ENCODE measurements at regions of chr9 and their contacts with region 1.

Region 1: DNA sequence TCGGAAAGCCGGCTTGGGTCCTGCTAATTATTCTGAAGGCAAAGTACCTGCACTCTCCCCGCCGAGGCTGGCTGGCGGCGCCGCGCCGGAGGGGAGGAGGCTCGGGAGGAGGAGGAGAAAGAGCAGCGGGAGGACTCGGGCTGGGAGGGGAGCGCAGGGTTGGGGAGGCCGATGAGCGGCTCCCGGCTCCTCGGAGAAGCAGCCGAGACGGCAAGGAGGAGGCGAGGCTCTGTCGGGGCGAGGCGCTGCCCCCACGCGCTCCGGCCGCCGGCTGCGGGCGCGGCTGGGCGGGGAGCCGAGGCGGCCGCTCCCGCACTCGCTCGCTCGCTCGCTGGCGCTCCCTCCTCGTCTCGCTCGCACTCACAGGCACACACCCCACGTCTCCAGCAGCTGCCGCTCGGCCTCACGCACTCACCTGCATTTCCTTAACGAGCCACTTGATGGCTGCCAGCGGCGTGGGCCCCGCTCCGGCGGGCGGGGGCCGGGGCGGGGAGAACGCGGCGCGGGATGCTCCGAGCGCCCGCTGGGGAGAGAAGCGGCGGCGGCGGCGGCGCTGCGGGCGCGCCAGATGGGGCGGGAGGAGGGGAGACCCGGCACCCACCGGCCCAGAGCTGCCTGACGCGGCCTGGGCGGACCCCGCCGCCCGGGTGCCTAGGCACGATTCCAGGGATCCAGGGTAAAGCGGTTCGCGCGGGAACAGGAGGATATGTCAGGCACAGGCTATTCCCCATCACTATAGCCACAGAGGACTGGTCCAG is at the start of gene PTPRD:
- DNase-seq: peak; percentile 77
- ATAC-seq: peak; percentile 81
- H3K4me3 ChIP-seq: peak within 1 kb of the TSS; percentile 67
- H3K27ac ChIP-seq: no peak within 1 kb of the TSS
- H3K4me1 ChIP-seq: no peaks in the 10 kb centered on the region
- H3K27me3 ChIP-seq: peaks cover 12% of the 10 kb centered on the region
- CTCF ChIP-seq: no peak; the same call in 1 of the 2 replicates
- total RNA-seq, gene PTPRD: 0.63 TPM in 1 of 2 replicates, not detected in the other

Region 2: DNA sequence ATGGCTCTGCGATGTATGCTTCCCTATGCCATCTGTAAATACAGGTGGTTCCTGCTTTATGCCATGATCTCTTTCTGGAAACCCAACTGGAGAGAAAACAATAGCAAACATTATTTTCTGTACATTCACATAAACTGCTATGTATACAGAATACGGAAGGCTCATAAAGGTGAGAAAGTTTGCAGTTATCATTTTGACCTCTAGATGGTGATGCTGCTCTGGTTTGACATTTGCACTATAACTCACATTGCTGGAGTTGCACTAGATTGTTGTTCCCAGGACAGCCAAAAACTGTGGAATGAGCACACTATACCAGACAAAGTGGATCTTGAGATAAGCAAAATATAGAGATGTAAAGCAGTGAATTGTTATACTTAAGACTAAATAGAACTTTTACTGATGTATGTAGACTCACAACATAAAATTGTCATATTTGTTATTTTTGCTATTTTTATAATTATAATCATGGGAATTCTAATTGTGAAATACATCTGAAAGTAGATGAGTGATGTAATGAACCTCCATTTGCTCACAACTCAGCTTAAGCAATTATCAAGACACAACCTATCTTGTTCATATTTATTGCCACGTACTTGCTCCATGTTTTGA is 246.5 kb before region 1 on chr9:
- CTCF ChIA-PET with region 1: no interaction called
- POLR2A ChIA-PET with region 1: no interaction called
- intact Hi-C with region 1: loop called (anchors 2 kb)
- DNase-seq: peak; percentile 66
- ATAC-seq: peak; percentile 69
- H3K4me3 ChIP-seq: no peak overlapping the region
- H3K27ac ChIP-seq: no peak overlapping the region
- H3K4me1 ChIP-seq: no peaks in the 10 kb centered on the region
- H3K27me3 ChIP-seq: no peaks in the 10 kb centered on the region
- CTCF ChIP-seq: peak; percentile 69

Region 3: GRCh38 chr9:10649076-10649475 is 36.3 kb after region 1 on chr9:
- CTCF ChIA-PET with region 1: no interaction called
- POLR2A ChIA-PET with region 1: no interaction called
- intact Hi-C with region 1: loop called (anchors 2 kb)
- DNase-seq: peak; percentile 57
- ATAC-seq: peak; percentile 94
- H3K4me3 ChIP-seq: no peak overlapping the region
- H3K27ac ChIP-seq: peak overlapping the region; percentile 30; the same call in 1 of the 2 replicates
- H3K4me1 ChIP-seq: peaks cover 8% of the 10 kb centered on the region; the same call in 1 of the 2 replicates
- H3K27me3 ChIP-seq: no peaks in the 10 kb centered on the region
- CTCF ChIP-seq: no peak

Region 4: DNA sequence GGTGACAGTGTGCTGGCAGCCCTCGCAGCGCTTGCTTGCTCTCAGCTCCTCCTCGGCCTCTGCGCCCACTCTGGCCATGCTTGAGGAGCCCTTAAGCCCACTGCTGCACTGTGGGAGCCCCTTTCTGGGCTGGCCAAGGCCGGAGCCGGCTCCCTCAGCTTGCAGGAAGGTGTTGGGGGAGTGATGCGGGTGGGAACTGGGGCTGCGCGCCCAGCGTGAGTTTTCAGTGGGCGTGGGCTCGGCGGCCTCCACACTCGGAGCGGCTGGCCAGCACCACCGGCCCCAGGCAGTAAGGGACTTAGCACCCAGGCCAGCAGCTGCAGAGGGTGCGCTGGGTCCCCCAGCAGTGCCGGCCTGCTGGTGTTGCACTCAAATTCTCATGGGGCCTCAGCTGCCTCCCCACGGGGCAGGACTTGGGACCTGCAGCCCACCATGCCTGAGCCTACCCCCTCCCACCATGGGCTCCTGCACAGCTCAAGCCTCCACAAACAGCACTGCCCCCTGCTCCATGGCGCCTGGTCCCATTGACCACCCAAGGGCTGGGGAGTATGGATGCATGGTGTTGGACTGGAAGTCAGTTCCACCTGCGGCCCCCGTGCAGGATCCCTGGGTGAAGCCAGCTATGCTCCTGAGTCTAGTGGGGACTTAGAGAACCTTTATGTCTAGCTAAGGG is 223.1 kb after region 1 on chr9:
- CTCF ChIA-PET with region 1: no interaction called
- POLR2A ChIA-PET with region 1: no interaction called
- intact Hi-C with region 1: loop called (anchors 5 kb)
- DNase-seq: no peak
- ATAC-seq: no peak
- H3K4me3 ChIP-seq: no peak overlapping the region
- H3K27ac ChIP-seq: no peak overlapping the region
- H3K4me1 ChIP-seq: no peaks in the 10 kb centered on the region
- H3K27me3 ChIP-seq: no peaks in the 10 kb centered on the region
- CTCF ChIP-seq: no peak

Region 5: GRCh38 chr9:11319538-11319937 is 706.7 kb after region 1 on chr9:
- CTCF ChIA-PET with region 1: no interaction called
- POLR2A ChIA-PET with region 1: no interaction called
- intact Hi-C with region 1: loop called (anchors 10 kb)
- DNase-seq: peak; percentile 33
- ATAC-seq: peak; percentile 85
- H3K4me3 ChIP-seq: no peak overlapping the region
- H3K27ac ChIP-seq: no peak overlapping the region
- H3K4me1 ChIP-seq: no peaks in the 10 kb centered on the region; the same call in 1 of the 2 replicates
- H3K27me3 ChIP-seq: no peaks in the 10 kb centered on the region
- CTCF ChIP-seq: peak; percentile 60